ENCODE measurements at regions of chr2 and their contacts with region 1.

Region 1: DNA sequence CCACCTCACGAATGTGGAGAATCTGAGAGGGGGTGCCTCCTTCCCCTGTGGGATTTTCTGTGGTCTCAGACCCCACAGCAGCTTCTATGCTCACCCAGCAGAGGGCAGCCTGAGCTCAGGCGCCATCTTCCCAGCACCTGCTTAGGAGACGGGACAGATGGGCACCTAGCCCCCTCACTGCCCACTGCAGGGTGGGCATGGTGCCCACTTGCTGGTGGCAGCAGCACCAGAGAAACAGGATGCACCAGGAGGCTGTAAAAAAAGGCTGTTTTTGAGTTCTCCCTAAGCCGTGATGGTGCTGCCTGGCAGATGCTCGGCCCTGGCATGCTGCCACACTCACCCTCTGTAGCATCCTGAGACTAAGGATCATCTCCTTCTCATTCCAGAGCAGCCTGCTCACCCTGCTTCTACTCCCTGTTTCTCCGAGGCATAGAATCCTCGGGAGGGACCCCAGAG is 19.1 kb upstream of the SLC20A1 start:
- DNase-seq: peak; percentile 54 to 58
- ATAC-seq: peak; percentile 67 to 86 (median 78)
- H3K4me3 ChIP-seq: peak overlapping the region in 4 of 10 donors; percentile 2 to 33 (median 24)
- H3K27ac ChIP-seq: peak overlapping the region; percentile 32 to 88 (median 76)
- H3K4me1 ChIP-seq: peaks cover 0 to 86% (median 17%) of the 10 kb centered on the region in 9 donors
- H3K27me3 ChIP-seq: peaks cover 0 to 8% (median 0%) of the 10 kb centered on the region in 7 donors
- CTCF ChIP-seq: peak; percentile 70 to 92 (median 85)

Region 2: DNA sequence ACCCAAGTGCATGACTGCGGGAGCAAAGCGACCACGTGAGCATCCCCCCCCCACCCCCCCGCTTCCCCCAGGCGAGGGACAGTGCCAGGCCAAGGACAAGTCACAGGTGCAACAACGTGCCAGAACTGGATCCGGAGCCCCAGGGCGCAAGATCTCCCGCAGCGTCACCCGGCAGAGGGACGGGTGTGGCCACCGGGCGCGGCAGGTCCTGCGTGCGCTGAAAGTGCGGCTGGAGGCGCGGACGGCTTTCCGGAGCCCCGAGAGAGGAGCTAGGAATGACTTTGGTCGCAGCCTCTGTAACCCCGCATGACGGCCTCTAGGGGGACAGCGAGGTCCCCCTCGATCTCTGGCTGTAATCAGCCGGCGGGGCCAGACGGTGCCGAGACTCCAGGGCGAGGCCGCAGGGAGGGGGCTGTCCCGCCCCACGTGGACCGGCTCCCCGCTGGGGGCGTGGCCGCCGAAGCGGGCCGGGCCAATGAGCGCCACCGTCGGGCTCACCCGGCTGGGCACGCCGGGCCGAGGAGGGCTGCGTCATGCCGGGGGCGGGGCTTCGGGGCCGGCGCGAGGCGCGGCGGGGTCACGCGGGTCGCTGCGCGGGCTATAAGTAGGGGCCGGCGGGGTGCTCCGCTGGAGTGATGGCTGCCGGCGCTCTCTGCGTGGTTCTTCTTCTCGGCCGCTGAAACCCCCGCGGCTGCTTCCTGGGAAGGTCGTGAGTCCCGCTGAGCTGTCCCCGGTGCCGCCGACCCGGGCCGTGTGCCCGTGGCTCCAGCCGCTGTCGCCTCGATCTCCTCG is 18.9 kb after region 1 on chr2 and contains the start of gene SLC20A1:
- intact Hi-C with region 1: loop called in 1 of 10 experiments (anchors 2 kb)
- DNase-seq: peak; percentile 93 to 98
- ATAC-seq: peak; percentile 97 to 99 (median 98)
- H3K4me3 ChIP-seq: peak within 1 kb of the TSS; percentile 71 to 98 (median 88)
- H3K27ac ChIP-seq: peak within 1 kb of the TSS; percentile 94 to 99 (median 98)
- H3K4me1 ChIP-seq: peaks cover 4 to 84% (median 44%) of the 10 kb centered on the region in 9 donors
- H3K27me3 ChIP-seq: no peaks in the 10 kb centered on the region
- CTCF ChIP-seq: peak in 8 of 9 donors; percentile 37 to 63 (median 42)
- total RNA-seq, gene SLC20A1: 10.8 to 21.3 (median 13.2) TPM

Region 3: GRCh38 chr2:112685271-112685884 is 58.7 kb after region 1 on chr2:
- intact Hi-C with region 1: loop called in 9 of 10 experiments (anchors 2 to 10 kb)
- DNase-seq: no peak
- ATAC-seq: no peak
- H3K4me3 ChIP-seq: no peak overlapping the region
- H3K27ac ChIP-seq: no peak overlapping the region
- H3K4me1 ChIP-seq: peaks cover 0 to 43% (median 0%) of the 10 kb centered on the region in 9 donors
- H3K27me3 ChIP-seq: no peaks in the 10 kb centered on the region
- CTCF ChIP-seq: no peak

Region 4: GRCh38 chr2:112692496-112692911 is 65.9 kb after region 1 on chr2:
- intact Hi-C with region 1: loop called in 9 of 10 experiments (anchors 2 to 10 kb)
- DNase-seq: no peak
- ATAC-seq: peak; percentile 23 to 71 (median 55)
- H3K4me3 ChIP-seq: no peak overlapping the region
- H3K27ac ChIP-seq: peak overlapping the region in 3 of 10 donors; percentile 19 to 79 (median 34)
- H3K4me1 ChIP-seq: peaks cover 0 to 33% (median 0%) of the 10 kb centered on the region in 9 donors
- H3K27me3 ChIP-seq: no peaks in the 10 kb centered on the region
- CTCF ChIP-seq: no peak

Region 5: DNA sequence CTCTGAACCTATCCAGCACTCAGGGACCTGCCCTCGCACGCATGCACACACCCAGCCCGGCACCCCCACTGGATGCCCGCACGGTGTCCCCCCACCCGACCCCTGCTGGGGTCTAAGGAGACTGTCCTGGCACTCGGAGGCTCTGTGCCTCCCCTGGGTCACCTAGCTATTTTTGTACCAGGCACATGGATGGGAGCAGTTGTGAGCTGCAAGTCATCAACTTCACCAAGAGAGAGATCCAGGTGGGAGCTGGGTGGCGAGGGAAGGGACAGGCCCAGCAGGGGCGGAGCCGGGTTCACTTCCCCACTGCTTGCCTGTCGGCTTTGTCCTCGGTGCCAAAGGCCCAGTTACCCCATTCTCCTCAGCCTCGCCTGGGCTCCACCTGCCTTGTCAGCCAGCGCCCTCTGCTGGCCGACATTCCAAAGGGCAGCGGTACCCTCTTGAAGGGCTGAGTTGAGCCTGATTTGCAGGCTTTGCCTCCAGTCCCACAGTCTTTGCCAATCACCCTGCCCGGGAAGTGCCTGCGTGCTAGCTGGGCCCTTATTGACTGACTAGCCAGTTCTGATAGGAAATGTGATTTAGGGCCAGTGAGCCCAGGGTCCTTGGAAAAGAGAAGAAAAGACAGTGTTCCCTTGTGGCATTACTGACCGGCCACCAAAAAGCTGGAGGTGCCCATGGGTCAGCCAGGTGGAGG is 100.0 kb after region 1 on chr2:
- intact Hi-C with region 1: loop called in 9 of 10 experiments (anchors 2 to 10 kb)
- DNase-seq: peak; percentile 86 to 87
- ATAC-seq: peak; percentile 88 to 96 (median 93)
- H3K4me3 ChIP-seq: no peak overlapping the region
- H3K27ac ChIP-seq: peak overlapping the region in 1 of 10 donors; percentile 5
- H3K4me1 ChIP-seq: peaks cover 0 to 36% (median 4%) of the 10 kb centered on the region in 9 donors
- H3K27me3 ChIP-seq: peaks cover 0 to 27% (median 5%) of the 10 kb centered on the region in 7 donors
- CTCF ChIP-seq: peak; percentile 89 to 99 (median 97)